ENCODE measurements at regions of chr19 and their contacts with region 1.

Region 1: GRCh38 chr19:37779127-37780005 is at the start of gene ZNF573:
- DNase-seq: peak; percentile 62 to 99 (median 94)
- ATAC-seq: peak; percentile 94
- H3K4me3 ChIP-seq: peak within 1 kb of the TSS; percentile 82
- H3K4me3 Mint-ChIP-seq: peak within 1 kb of the TSS; percentile 91 to 98 (median 96)
- H3K27ac ChIP-seq: peak within 1 kb of the TSS; percentile 99
- H3K27ac Mint-ChIP-seq: peak within 1 kb of the TSS; percentile 89 to 100 (median 98)
- H3K4me1 ChIP-seq: peaks cover 6% of the 10 kb centered on the region in 2 donors
- H3K4me1 Mint-ChIP-seq: peaks cover 9 to 53% (median 48%) of the 10 kb centered on the region in 7 donors
- H3K27me3 ChIP-seq: no peaks in the 10 kb centered on the region
- H3K27me3 Mint-ChIP-seq: no peaks in the 10 kb centered on the region
- total RNA-seq, gene ZNF573: 5.9 to 43.8 (median 16.6) TPM

Region 2: GRCh38 chr19:36973021-36973843 is 806.1 kb before region 1 on chr19:
- CTCF ChIA-PET with region 1: no interaction called
- POLR2A ChIA-PET with region 1: no interaction called
- intact Hi-C with region 1: loop called in 1 of 2 experiments (anchors 1 kb)
- DNase-seq: peak; percentile 56 to 84 (median 73)
- ATAC-seq: peak; percentile 96
- H3K4me3 ChIP-seq: peak overlapping the region; percentile 100
- H3K4me3 Mint-ChIP-seq: peak overlapping the region; percentile 92 to 99 (median 97)
- H3K27ac ChIP-seq: peak overlapping the region; percentile 75
- H3K27ac Mint-ChIP-seq: peak overlapping the region; percentile 83 to 97 (median 92)
- H3K4me1 ChIP-seq: peaks cover 5 to 15% of the 10 kb centered on the region in 2 donors
- H3K4me1 Mint-ChIP-seq: peaks cover 9 to 22% (median 13%) of the 10 kb centered on the region in 7 donors
- H3K27me3 ChIP-seq: no peaks in the 10 kb centered on the region
- H3K27me3 Mint-ChIP-seq: no peaks in the 10 kb centered on the region

Region 3: GRCh38 chr19:37506387-37507166 is 272.8 kb before region 1 on chr19 and contains the start of gene ZNF793:
- CTCF ChIA-PET with region 1: no interaction called
- POLR2A ChIA-PET with region 1: interaction called, 6 read pairs
- intact Hi-C with region 1: loop called in 1 of 2 experiments (anchors 1 kb)
- DNase-seq: peak; percentile 33 to 88 (median 83)
- ATAC-seq: peak; percentile 90
- H3K4me3 ChIP-seq: peak within 1 kb of the TSS; percentile 83
- H3K4me3 Mint-ChIP-seq: no peak within 1 kb of the TSS
- H3K27ac ChIP-seq: peak within 1 kb of the TSS; percentile 90
- H3K27ac Mint-ChIP-seq: no peak within 1 kb of the TSS
- H3K4me1 ChIP-seq: peaks cover 0 to 14% of the 10 kb centered on the region in 2 donors
- H3K4me1 Mint-ChIP-seq: peaks cover 0 to 2% (median 0%) of the 10 kb centered on the region in 7 donors
- H3K27me3 ChIP-seq: no peaks in the 10 kb centered on the region
- H3K27me3 Mint-ChIP-seq: peaks cover 0 to 5% (median 0%) of the 10 kb centered on the region in 5 donors
- total RNA-seq, gene ZNF793: 1.1 to 11.7 (median 6.0) TPM

Region 4: DNA sequence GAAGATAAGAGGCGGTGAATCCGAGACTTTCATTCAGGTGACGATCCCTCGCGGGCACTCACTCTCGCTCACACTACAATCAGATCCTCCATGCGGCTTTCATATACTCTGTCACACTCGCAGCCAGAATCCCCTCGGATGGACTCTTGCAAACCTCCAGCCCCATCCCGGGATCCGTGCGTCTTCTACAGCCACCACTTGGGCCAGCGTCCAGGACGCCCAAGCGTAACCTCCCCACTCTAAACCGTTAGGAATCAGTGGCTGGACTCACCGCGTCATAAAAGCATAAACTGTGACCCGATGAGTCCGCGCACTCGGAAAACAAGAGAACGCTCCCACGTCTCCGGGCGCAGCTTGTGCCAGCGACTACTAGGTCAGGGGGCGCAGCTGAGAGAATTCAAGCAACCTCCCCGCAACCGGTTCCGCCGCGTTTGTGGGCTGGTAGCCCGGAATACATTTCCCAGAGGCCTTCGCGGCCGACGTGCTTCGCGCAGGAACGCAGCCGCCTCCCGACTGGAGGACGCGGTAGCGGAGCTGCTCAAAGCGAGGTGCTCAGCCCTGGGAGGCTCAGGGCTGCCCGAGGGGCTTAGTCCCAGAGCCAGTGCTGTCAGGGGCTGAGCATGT is 87.4 kb before region 1 on chr19:
- CTCF ChIA-PET with region 1: interaction called, 3 read pairs
- POLR2A ChIA-PET with region 1: interaction called, 8 read pairs
- intact Hi-C with region 1: loop called in 1 of 2 experiments (anchors 1 kb)
- DNase-seq: peak; percentile 52 to 83 (median 73)
- ATAC-seq: peak; percentile 97
- H3K4me3 ChIP-seq: peak overlapping the region; percentile 95
- H3K4me3 Mint-ChIP-seq: peak overlapping the region; percentile 83 to 98 (median 96)
- H3K27ac ChIP-seq: peak overlapping the region; percentile 82
- H3K27ac Mint-ChIP-seq: peak overlapping the region; percentile 69 to 98 (median 96)
- H3K4me1 ChIP-seq: peaks cover 0 to 4% of the 10 kb centered on the region in 2 donors
- H3K4me1 Mint-ChIP-seq: peaks cover 5 to 17% (median 11%) of the 10 kb centered on the region in 7 donors
- H3K27me3 ChIP-seq: no peaks in the 10 kb centered on the region
- H3K27me3 Mint-ChIP-seq: no peaks in the 10 kb centered on the region

Region 5: DNA sequence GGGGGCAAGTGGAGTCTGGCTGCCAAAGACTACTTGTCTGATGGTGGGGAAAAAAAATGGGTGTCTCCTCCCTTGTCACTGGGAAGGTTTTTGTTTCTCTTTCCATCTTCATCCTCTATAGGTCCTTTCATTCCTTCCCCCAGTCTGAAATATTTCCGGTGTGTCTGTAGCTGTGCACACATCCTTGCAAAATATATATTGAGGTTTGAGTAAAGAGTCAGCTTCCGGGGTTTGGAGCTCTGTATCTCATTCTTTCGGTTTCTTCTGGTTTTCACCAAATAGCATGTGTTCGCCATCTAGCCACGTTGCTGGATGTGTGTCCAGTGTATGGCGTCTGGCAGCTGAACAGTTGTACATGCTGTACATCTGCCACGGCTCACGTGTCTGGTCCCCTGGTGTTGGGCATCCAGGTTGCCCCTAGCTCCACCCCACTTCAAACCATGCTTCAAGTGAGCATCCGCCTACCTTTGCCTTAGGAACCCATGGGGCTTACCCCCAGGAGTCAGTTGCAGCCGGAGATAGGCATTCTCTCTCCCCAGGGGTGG is 269.8 kb after region 1 on chr19:
- CTCF ChIA-PET with region 1: no interaction called
- POLR2A ChIA-PET with region 1: no interaction called
- intact Hi-C with region 1: loop called in 1 of 2 experiments (anchors 1 kb)
- DNase-seq: peak; percentile 20 to 87 (median 82)
- ATAC-seq: peak; percentile 89
- H3K4me3 ChIP-seq: peak overlapping the region; percentile 19
- H3K4me3 Mint-ChIP-seq: peak overlapping the region; percentile 71 to 91 (median 85)
- H3K27ac ChIP-seq: peak overlapping the region; percentile 74
- H3K27ac Mint-ChIP-seq: peak overlapping the region; percentile 94 to 100 (median 97)
- H3K4me1 ChIP-seq: peaks cover 20 to 36% of the 10 kb centered on the region in 2 donors
- H3K4me1 Mint-ChIP-seq: peaks cover 22 to 56% (median 44%) of the 10 kb centered on the region in 7 donors
- H3K27me3 ChIP-seq: no peaks in the 10 kb centered on the region
- H3K27me3 Mint-ChIP-seq: peaks cover 0 to 2% (median 0%) of the 10 kb centered on the region in 5 donors

Measured in naive thymus-derived CD4-positive, alpha-beta T cell (primary cell).